ENCODE measurements at regions of chr11 and their contacts with region 1.

Region 1: DNA sequence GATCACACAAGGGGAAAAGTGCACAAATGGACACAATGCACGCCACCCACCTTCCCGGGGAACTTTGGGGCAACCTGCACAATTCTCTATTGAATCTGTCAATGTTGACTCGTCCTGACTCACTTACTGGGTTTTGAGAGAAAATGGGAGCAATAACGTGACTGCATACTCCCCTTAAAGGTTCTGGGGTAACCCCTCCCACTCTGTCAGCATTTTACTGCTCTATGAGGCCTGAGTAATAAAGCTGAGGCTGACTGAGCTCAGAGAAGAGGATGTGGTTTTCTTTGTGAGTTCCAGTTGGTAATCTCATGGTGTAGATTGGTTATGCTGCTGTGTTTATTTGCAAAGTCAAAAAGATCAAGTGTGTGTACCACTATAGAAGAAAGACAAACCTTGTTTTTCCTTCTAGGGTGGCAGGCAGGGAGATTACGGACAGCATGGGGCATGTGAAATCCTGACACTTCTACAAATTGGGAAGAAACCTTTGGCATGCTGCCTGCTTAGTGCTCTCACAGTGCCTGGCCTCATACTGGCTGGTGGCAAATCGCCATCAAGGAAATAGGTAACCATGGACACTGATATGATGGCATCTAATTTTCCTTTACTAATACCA is 16.1 kb upstream of the APOA1 start:
- DNase-seq: peak; percentile 74
- H3K4me3 ChIP-seq: no peak overlapping the region
- H3K27ac ChIP-seq: peak overlapping the region; percentile 69
- H3K27me3 ChIP-seq: no peaks in the 10 kb centered on the region
- CTCF ChIP-seq: no peak

Region 2: GRCh38 chr11:116835791-116836631 is 17.6 kb before region 1 on chr11:
- CTCF ChIA-PET with region 1: interaction called, 22 read pairs
- POLR2A ChIA-PET with region 1: interaction called, 5 read pairs
- DNase-seq: peak; percentile 87
- H3K4me3 ChIP-seq: peak overlapping the region; percentile 55
- H3K27ac ChIP-seq: peak overlapping the region; percentile 21
- H3K27me3 ChIP-seq: no peaks in the 10 kb centered on the region
- CTCF ChIP-seq: peak; percentile 69

Region 3: GRCh38 chr11:117010808-117011540 is 157.4 kb after region 1 on chr11:
- CTCF ChIA-PET with region 1: no interaction called
- POLR2A ChIA-PET with region 1: interaction called, 10 read pairs
- DNase-seq: peak; percentile 52
- H3K4me3 ChIP-seq: no peak overlapping the region
- H3K27ac ChIP-seq: no peak overlapping the region
- H3K27me3 ChIP-seq: no peaks in the 10 kb centered on the region
- CTCF ChIP-seq: no peak

Measured in AG04450 (cell line).